ENCODE measurements at regions of chr15 and their contacts with region 1.

Region 1: GRCh38 chr15:33700695-33701304 is 267.5 kb upstream of the CHRM5 start:
- DNase-seq: peak; percentile 67
- ATAC-seq: peak; percentile 86 to 97

Region 2: GRCh38 chr15:32659340-32660155 is 1041.3 kb before region 1 on chr15:
- intact Hi-C with region 1: loop called in 1 of 2 experiments (anchors 2 kb)
- DNase-seq: no peak
- ATAC-seq: no peak

Region 3: GRCh38 chr15:33086507-33087121 is 614.2 kb before region 1 on chr15:
- intact Hi-C with region 1: loop called in 1 of 2 experiments (anchors 10 kb)
- DNase-seq: no peak
- ATAC-seq: peak in 1 of 2 donors; percentile 47

Region 4: GRCh38 chr15:33292717-33293307 is 408.0 kb before region 1 on chr15:
- intact Hi-C with region 1: loop called (anchors 2 to 10 kb)
- DNase-seq: peak; percentile 53
- ATAC-seq: peak; percentile 53 to 78

Region 5: DNA sequence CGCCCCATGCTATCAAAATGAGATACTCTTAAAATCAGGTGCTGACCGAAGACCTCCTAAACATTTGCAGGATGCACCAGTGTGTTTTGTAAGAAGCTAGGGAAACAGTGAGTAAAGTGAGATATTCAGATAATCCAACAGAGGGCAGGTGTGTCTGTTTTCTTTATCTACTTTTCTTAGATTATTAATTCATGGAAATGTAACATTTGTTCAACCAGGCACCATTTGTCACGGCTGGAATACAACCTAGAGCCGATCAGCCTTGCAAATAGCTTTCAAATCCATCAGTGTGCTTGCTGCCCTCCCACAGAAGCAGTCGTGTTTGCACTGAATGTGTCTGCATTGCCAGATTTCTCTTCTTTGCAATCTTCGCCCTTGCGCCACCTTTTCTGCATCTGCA is 65.6 kb after region 1 on chr15:
- intact Hi-C with region 1: no loop called
- DNase-seq: no peak
- ATAC-seq: no peak